BJ (cell line): ENCODE measurements at regions of chr14 and their contacts with region 1.

Region 1: GRCh38 chr14:58501214-58501816 is 73.8 kb downstream of the KIAA0586 start:
- DNase-seq: peak; percentile 27
- H3K4me3 ChIP-seq: no peak overlapping the region
- H3K27me3 ChIP-seq: no peaks in the 10 kb centered on the region
- CTCF ChIP-seq: peak; percentile 78

Region 2: GRCh38 chr14:58476320-58476719 is 25.0 kb before region 1 on chr14:
- CTCF ChIA-PET with region 1: no interaction called
- POLR2A ChIA-PET with region 1: no interaction called
- DNase-seq: no peak
- H3K4me3 ChIP-seq: no peak overlapping the region
- H3K27me3 ChIP-seq: no peaks in the 10 kb centered on the region
- CTCF ChIP-seq: no peak

Region 3: GRCh38 chr14:58488550-58488949 is 12.8 kb before region 1 on chr14:
- CTCF ChIA-PET with region 1: interaction called, 17 read pairs
- POLR2A ChIA-PET with region 1: no interaction called
- DNase-seq: no peak
- H3K4me3 ChIP-seq: no peak overlapping the region
- H3K27me3 ChIP-seq: no peaks in the 10 kb centered on the region
- CTCF ChIP-seq: no peak

Region 4: GRCh38 chr14:58637391-58638230 is 136.3 kb after region 1 on chr14 and contains the start of gene DACT1:
- CTCF ChIA-PET with region 1: interaction called, 38 read pairs
- POLR2A ChIA-PET with region 1: no interaction called
- DNase-seq: no peak
- H3K4me3 ChIP-seq: peak within 1 kb of the TSS; percentile 78
- H3K27me3 ChIP-seq: no peaks in the 10 kb centered on the region
- CTCF ChIP-seq: no peak
- polyA plus RNA-seq, gene DACT1: 17.8 and 18.8 TPM in 2 replicates

Region 5: DNA sequence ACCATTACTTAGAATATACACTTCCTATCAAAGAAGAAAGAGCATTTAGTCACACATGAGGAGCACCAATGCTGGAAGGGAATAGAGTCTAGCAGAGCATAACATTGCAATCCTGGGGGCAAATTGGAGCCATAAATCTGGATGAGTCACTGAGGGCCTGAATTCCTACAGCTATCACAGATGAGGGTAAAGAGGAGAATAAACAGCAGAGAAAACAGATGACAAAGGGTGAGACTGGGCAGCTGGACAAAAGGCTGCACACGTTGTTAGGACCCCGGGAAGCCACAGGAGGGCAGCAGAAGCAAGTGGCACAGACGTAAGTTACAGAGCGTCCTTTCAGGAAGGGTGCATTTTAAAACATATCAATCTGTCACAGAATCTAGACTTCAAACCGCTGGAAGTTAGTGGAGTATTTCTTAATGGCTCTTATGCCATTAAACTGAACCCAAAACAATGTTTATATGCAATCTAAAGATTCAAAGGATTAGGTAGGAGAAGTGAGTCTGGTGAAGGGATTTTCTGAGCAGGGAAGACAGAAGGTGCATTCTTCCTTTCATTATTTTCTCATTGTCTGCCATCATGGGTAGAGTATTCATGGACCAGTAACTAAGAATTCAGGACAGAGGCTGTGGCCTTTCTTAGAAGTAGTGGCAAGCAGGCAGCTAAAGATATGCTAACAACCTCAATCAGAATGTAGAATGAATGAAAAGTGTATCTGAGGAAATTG is 527.3 kb after region 1 on chr14:
- CTCF ChIA-PET with region 1: interaction called, 11 read pairs
- POLR2A ChIA-PET with region 1: no interaction called
- DNase-seq: peak; percentile 93
- H3K4me3 ChIP-seq: no peak overlapping the region
- H3K27me3 ChIP-seq: no peaks in the 10 kb centered on the region
- CTCF ChIP-seq: peak; percentile 91

Region 6: GRCh38 chr14:59120921-59121320 is 619.6 kb after region 1 on chr14:
- CTCF ChIA-PET with region 1: interaction called, 26 read pairs
- POLR2A ChIA-PET with region 1: no interaction called
- DNase-seq: no peak
- H3K4me3 ChIP-seq: no peak overlapping the region
- H3K27me3 ChIP-seq: no peaks in the 10 kb centered on the region
- CTCF ChIP-seq: no peak